ENCODE measurements at regions of chr16 and their contacts with region 1.

Region 1: DNA sequence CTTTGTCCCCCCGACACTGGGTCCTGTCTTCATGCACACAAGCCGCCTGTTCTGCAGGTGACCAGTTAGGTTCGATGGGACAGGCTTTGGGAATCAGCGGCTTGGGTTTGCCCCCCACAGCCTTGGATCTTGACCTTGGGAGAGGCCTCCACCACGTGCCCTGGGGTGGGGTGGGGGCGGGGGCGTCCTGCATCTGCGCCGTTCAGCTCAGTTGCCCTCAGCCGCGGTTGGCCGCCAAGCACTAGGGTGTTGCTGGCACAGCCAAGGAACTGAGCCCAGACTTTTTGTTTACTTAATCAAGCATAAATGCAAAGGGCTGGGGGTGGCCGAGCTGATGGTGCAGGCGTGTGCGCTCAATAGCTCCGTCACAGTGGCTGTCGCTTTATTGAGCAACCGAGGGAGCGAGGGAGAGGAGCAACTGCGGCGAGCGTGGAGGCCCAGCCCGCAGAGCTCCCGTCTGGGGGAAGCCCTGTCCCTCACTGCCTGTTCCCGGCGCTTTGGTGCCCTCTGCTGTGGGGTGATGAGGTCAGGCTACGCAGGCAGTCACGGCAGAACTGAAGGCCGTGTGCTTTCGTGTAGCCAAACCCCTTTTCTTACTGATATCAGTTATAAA is 33.9 kb downstream of the JPH3 start:
- DNase-seq: peak; percentile 7
- H3K4me3 ChIP-seq: no peak overlapping the region
- CTCF ChIP-seq: peak; percentile 85

Region 2: DNA sequence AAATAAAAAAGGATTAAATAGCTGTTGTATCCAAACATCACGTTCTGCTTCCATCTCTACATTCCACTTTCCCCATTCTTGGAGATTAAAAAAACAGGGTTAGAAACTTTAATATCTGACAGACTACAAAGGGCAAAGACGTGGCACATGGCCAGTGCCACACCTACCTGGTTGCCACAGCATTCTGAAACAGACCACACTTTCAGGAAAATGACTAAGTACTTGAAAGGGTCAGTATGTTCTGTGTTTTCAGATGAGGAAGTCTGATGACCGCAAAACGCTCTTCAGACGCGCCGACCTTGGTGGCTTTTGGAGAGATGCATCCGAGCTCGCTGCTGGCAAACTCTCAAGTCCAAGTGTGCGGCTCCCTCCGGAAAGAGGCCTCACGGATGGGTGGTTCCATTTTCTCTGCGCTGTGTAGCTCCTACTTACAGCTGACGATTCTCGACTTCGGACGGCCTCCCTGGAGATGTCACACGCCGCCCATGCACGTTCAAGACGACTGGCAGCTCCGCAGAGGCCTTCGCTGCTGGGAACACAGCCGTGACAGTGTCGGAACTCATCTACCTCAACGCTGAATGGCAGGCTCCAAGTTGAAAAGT is 228.6 kb before region 1 on chr16:
- CTCF ChIA-PET with region 1: interaction called, 222 read pairs
- POLR2A ChIA-PET with region 1: no interaction called
- DNase-seq: no peak
- H3K4me3 ChIP-seq: no peak overlapping the region
- CTCF ChIP-seq: no peak

Region 3: GRCh38 chr16:87435372-87436224 is 200.6 kb before region 1 on chr16:
- CTCF ChIA-PET with region 1: interaction called, 19 read pairs
- POLR2A ChIA-PET with region 1: no interaction called
- DNase-seq: peak; percentile 21
- H3K4me3 ChIP-seq: peak overlapping the region; percentile 25; the same call in 1 of the 2 replicates
- CTCF ChIP-seq: no peak

Region 4: GRCh38 chr16:87581833-87582203 is 54.4 kb before region 1 on chr16:
- CTCF ChIA-PET with region 1: interaction called, 168 read pairs
- POLR2A ChIA-PET with region 1: no interaction called
- DNase-seq: peak; percentile 87
- H3K4me3 ChIP-seq: no peak overlapping the region
- CTCF ChIP-seq: no peak

Region 5: DNA sequence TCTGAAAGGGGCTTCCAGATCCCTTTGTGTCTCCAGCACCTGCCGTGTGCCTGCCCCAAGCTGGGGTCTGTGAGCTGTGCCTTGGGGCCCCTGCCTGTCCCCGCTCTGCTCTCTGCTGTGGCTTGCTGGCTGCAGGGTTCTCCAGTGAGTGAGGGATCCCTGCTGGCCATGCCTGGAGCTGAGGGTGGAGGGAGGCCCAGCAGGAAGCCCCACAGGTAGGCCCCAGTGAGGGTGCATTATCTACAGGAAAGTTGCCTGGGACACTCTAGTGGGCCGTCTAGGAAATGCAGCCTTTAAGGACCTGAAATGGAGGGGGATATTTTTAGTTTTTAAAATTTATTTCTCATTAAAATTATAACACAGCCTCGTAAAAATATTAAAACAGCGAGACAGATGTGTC is 17.1 kb after region 1 on chr16:
- CTCF ChIA-PET with region 1: interaction called, 32 read pairs
- POLR2A ChIA-PET with region 1: no interaction called
- DNase-seq: no peak
- H3K4me3 ChIP-seq: no peak overlapping the region
- CTCF ChIP-seq: peak; percentile 35

Measured in AG04449 (cell line).